ENCODE measurements at regions of chrX and their contacts with region 1.

Region 1: DNA sequence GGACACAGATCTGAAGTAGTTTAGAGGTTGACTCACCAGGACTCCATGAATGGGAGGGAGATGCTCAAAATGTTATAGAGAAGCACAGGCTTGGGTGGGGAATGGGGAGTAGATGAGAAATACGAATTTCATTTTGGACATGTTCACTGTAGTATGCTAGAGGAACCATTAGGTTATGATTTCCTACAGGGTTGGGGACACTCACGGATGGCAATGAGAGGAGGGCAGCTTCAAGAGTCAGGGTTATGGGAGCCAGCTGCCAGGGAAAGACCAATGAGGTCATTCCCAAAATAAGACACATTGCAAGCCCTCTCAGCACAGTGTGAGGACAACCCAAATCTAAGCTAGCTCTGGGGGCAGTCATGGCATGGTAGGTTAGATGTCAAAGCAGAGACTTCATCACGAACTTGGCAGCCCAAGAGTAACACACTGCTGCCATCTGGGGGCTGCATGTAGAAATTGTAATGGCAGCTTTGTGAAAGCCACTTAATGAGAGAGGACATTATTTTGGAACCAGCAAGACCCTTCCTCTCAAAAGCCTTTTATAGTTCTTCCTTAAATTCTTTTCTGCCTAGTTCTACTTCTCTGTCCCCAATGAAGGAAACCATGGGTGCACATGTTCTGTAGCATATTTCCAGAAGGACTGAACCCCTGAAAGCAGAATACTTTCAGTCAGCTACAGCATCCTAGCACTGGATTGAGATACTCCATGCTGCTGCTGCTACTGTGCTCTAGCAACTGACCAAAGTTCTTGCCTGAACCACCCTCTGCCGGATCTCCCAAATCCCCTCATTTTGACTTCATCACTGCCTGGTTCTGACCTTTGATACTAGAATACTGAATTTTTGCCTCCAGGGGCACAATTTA is 16.2 kb upstream of the ZCCHC12 start:
- H3K4me3 Mint-ChIP-seq: no peak overlapping the region
- H3K27ac Mint-ChIP-seq: no peak overlapping the region
- H3K4me1 Mint-ChIP-seq: peaks cover 12% of the 10 kb centered on the region
- H3K27me3 Mint-ChIP-seq: no peaks in the 10 kb centered on the region

Region 2: DNA sequence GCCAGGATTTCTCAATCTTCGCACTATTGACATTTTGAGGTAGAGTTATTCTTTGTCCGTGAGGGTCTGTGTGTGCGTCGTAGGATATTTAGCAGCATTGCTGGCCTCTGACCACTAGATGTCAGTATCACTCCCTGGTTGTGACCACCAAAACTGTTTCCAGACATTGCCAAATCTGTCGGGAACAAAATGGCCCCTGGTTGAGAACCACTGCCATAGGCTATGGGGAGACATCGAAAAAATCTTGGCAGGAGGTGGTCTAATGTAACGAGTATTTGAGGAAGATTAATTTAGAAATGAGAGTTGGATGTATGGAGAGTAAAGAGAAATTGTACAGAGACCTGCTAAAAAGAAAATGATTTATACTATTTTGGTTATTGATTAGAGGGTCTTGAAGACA is 203.4 kb before region 1 on chrX:
- intact Hi-C with region 1: loop called (anchors 1 kb)
- H3K4me3 Mint-ChIP-seq: no peak overlapping the region
- H3K27ac Mint-ChIP-seq: no peak overlapping the region
- H3K4me1 Mint-ChIP-seq: peaks cover 5% of the 10 kb centered on the region
- H3K27me3 Mint-ChIP-seq: no peaks in the 10 kb centered on the region

Region 3: DNA sequence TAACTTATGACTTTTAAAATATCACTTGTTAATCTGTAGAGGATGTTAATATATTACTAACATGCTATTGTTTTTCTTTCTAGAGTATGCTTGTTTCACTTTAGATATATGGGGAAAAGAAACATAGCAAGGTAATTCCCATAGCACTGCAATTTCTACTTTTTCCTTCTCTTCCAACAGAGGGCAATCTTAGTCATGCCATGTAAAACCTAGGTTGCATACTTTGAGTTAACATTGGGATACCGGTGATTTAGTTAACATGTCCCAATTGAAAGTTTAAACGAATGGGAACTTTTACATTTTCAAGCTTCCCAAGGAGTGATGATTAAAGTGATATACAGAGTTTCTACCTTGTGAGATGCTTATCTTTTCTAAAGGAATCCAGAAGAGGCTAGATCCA is 169.4 kb before region 1 on chrX:
- intact Hi-C with region 1: loop called (anchors 10 kb)
- H3K4me3 Mint-ChIP-seq: no peak overlapping the region
- H3K27ac Mint-ChIP-seq: no peak overlapping the region
- H3K4me1 Mint-ChIP-seq: no peaks in the 10 kb centered on the region
- H3K27me3 Mint-ChIP-seq: no peaks in the 10 kb centered on the region

Region 4: DNA sequence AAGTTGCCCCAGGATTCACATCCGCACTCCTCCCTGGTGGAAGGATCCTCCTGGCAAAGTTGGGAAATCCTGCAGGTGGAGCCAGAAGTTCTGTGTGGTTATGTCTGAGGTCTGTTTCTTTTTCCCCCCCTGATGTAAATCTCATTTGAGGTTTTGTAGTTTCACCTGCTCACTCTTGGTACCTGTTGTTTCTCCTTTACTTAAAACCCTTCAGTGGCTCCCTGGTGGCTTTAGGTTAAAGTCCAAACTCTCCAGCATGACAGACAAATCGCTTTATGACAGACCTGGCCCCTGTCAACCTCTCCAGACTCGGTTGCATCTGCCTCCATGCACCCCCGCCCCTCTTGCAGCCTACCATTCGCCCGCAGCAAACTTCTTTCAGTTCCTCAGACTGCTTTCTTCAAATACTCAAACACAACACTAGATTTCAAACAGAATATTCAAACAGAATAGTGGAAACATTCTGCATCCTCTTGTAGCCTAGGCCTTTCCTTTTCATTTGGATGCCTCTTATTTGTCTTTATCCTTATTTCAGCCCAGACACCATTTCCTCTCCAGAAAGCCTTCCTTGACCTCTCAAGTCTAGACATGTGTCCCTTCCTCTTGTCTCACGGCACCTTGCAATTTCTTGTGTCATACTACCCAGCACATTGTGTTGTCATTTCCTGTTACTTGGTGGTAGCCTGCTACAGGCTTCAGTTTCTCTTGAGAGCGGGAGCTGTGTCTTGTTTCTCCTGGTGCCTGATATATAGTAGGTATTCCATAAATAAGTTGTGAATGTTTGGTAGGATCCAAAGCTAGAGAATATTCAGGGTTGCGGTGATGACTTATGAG is 55.2 kb before region 1 on chrX:
- intact Hi-C with region 1: loop called (anchors 10 kb)
- H3K4me3 Mint-ChIP-seq: no peak overlapping the region
- H3K27ac Mint-ChIP-seq: peak overlapping the region; percentile 82
- H3K4me1 Mint-ChIP-seq: peaks cover 38% of the 10 kb centered on the region
- H3K27me3 Mint-ChIP-seq: no peaks in the 10 kb centered on the region